Esophagus muscularis mucosa (tissue), 4 donors: ENCODE measurements at regions of chr12 and their contacts with region 1.

Region 1: DNA sequence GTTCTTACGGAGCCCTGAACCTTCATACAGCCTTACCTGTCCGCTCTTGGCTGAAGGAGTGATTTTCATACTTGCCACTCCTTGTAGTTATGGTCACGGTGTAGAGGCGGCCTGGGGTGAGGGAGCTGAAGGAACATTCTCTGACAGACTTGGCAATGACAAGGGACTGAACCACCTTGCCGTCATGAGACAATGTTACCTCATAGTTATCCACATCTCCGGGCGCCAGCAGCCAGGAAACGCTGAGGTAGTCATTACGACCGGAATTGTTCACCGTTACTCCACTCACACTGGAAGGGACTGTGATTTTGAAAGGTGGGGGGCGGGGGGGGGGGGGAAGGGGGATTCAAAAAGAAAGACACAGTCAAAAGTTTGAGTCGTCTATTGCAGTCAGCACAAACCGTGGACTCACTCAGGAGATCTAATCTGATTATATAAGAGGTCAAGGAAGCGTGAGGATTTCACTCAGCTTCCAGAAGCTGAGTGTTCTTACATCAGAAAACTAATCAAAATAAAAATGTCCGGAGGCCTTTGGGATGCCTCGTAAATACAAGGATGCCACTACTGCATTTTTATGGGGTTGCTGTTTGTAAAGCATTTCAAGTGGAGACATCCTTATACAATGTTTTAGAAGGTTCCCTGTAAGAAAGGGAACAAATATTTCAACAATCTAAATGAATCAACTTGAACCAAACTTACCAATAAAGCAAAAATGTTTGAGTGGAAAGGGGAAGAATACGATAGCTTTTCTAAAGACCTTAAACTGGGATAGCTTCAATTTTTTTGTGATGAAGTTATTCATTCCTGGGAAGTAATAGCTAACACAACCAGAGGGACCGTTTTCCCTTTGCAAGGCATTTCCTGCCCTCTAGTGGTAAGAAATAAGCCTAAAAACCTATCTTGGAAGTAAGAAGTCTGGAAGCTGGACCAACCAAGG is 60.6 kb downstream of the PTPRB start:
- DNase-seq: no peak
- H3K4me3 ChIP-seq: no peak overlapping the region
- H3K27ac ChIP-seq: no peak overlapping the region
- H3K4me1 ChIP-seq: peaks cover 0 to 16% (median 8%) of the 10 kb centered on the region in 4 donors
- H3K27me3 ChIP-seq: no peaks in the 10 kb centered on the region
- CTCF ChIP-seq: peak; percentile 65 to 77 (median 73)
- EP300 ChIP-seq: no peak
- POLR2A ChIP-seq: no peak

Region 2: GRCh38 chr12:69879041-69879960 is 697.3 kb before region 1 on chr12:
- intact Hi-C with region 1: loop called (anchors 2 kb)
- DNase-seq: no peak
- H3K4me3 ChIP-seq: peak overlapping the region; percentile 18 to 46 (median 28)
- H3K27ac ChIP-seq: no peak overlapping the region
- H3K4me1 ChIP-seq: peaks cover 6 to 9% (median 7%) of the 10 kb centered on the region in 4 donors
- H3K27me3 ChIP-seq: peaks cover 0 to 16% (median 3%) of the 10 kb centered on the region in 4 donors
- CTCF ChIP-seq: peak; percentile 81 to 89 (median 85)
- EP300 ChIP-seq: no peak
- POLR2A ChIP-seq: no peak

Region 3: GRCh38 chr12:69900720-69901131 is 675.9 kb before region 1 on chr12:
- intact Hi-C with region 1: loop called (anchors 1 kb)
- DNase-seq: no peak
- H3K4me3 ChIP-seq: no peak overlapping the region
- H3K27ac ChIP-seq: no peak overlapping the region
- H3K4me1 ChIP-seq: peaks cover 0 to 8% (median 2%) of the 10 kb centered on the region in 4 donors
- H3K27me3 ChIP-seq: no peaks in the 10 kb centered on the region
- CTCF ChIP-seq: peak; percentile 68 to 78 (median 78)
- EP300 ChIP-seq: no peak
- POLR2A ChIP-seq: no peak

Region 4: DNA sequence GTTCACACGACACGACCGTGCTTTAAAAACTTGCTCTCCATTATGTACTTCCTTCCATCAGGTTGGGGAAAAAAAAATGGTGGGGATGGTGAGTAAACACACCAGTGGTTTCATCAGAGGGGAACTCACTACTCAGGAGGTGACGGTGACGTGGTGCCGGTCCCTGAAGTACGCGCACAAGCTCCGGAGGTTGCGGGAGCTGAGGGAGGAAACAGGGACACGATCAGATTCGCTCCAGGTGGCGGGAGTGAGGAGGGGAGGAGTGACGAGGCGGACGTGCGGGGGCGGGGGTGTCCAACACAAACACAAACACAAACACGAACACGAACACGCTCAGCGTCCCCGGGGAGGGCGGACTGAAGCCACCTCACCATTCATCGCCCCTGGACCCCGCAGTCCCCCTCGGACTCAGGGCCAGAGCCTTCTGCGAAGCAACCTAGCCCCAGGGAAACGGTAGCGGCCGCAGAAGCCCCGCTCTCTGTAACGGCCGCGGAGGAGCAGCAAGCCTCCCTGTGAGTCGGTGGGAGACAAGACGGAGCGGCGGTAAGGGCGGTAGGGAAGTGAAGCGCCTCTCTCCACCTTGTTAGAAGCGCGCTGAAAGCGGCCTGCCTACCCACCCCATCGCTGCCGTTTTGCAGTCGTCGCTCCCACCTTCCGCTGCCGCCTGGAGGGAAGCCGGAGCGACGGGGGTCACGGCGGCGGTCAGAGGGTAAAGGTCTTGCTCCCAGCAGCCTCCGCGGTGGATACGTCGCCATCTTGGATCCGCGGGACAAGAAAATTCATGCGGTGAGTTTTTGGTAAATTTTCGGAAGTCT is 333.7 kb before region 1 on chr12 and contains the start of gene CNOT2:
- intact Hi-C with region 1: loop called (anchors 10 kb)
- DNase-seq: peak; percentile 97
- H3K4me3 ChIP-seq: peak within 1 kb of the TSS; percentile 85 to 97 (median 90)
- H3K27ac ChIP-seq: peak within 1 kb of the TSS; percentile 93 to 98 (median 96)
- H3K4me1 ChIP-seq: peaks cover 44 to 49% (median 47%) of the 10 kb centered on the region in 4 donors
- H3K27me3 ChIP-seq: no peaks in the 10 kb centered on the region
- CTCF ChIP-seq: no peak
- EP300 ChIP-seq: no peak
- POLR2A ChIP-seq: no peak
- total RNA-seq, gene CNOT2: 55.6 to 87.6 (median 82.7) TPM